ENCODE measurements at regions of chr13 and their contacts with region 1.

Region 1: DNA sequence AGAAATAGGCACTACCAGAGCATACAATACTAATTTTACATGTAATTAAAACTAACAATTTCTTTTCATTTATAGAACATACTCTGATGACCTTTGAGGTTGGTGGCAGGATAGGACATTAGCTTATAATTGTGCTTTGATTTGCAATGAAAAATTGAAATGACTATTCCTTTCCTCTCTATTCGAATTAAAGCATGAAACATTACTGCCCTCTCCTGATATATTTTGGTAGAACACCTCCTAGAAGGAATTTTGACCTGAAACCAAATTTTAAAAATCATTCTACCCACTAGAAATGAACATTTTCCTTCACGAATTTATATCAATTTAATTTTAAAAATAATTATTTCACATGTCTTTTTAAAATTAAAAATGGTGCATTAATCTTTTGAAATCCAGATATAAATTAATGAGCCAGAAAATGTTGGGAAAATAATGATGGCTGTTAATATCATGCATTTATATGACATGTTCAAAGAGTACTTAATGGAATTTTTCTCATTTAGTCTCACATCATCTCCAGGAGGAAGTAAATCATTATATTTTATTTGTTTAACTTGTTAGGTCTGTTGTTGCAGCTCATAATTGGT is 556.3 kb upstream of the ARGLU1 start:
- DNase-seq: no peak
- H3K4me3 ChIP-seq: no peak overlapping the region
- H3K27ac ChIP-seq: no peak overlapping the region
- H3K4me1 ChIP-seq: no peaks in the 10 kb centered on the region
- H3K27me3 ChIP-seq: no peaks in the 10 kb centered on the region
- CTCF ChIP-seq: peak; percentile 22 to 60 (median 46)
- POLR2A ChIP-seq: no peak

Region 2: DNA sequence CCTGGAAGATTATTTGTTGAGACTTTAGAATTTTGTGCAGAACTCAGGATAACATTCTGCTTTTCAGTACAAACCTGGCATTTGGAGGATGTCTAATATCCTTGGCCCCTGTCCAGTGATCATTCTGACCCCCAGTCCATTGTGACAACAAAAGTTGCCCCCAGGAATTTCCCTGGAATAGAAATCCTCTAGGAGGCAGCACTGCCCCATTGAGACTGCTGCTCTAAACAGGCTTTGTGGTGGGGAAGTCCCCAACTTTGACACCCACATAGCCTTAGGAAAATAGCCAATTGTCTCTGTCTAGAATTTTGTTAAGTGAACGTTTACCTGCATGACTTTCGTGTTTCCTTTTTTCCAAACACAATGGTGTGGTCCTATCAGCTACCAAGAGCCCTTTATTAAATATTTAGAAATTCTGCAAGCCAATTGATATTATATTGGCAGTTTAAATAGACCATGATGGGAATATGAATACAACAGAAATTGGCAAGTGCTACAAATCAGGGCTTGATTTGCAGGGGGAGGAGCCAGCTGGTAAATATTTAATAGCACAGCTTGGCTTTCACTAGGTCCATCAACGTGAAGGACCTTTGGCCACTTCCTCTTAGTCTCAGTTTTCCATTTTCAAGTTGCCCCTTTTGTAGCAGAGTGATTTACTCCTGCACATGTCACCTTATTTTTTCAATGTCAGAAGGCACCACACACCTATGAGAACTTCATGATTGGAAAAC is 1040.4 kb before region 1 on chr13:
- intact Hi-C with region 1: loop called in 1 of 2 experiments (anchors 10 kb)
- DNase-seq: peak in 1 of 7 donors; percentile 5
- H3K4me3 ChIP-seq: no peak overlapping the region
- H3K27ac ChIP-seq: no peak overlapping the region
- H3K4me1 ChIP-seq: no peaks in the 10 kb centered on the region
- H3K27me3 ChIP-seq: no peaks in the 10 kb centered on the region
- CTCF ChIP-seq: peak in 4 of 6 experiments; percentile 14 to 31 (median 22)
- POLR2A ChIP-seq: no peak

Region 3: DNA sequence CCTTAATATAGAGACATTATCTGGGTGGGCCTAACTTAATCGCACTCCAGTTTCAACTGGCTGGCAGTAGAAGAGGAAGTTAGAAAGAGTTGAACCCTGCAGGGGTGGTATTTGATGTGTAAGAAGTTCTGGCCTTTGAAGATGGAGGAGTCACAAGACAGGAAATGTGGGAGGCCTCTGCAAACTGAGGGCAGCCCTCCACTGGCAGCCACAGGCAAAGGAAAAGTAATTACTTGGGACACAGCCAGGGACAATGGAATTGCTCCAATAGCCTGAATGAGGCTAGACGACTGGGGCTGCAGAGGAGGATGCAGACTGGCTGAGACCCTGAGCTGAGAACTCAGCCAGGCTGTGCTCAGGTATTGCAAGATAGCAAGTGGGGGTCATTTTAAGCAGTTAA is 147.0 kb after region 1 on chr13:
- intact Hi-C with region 1: no loop called
- DNase-seq: peak in 1 of 7 donors; percentile 3
- H3K4me3 ChIP-seq: no peak overlapping the region
- H3K27ac ChIP-seq: no peak overlapping the region
- H3K4me1 ChIP-seq: no peaks in the 10 kb centered on the region
- H3K27me3 ChIP-seq: no peaks in the 10 kb centered on the region
- CTCF ChIP-seq: no peak
- POLR2A ChIP-seq: no peak

Region 4: DNA sequence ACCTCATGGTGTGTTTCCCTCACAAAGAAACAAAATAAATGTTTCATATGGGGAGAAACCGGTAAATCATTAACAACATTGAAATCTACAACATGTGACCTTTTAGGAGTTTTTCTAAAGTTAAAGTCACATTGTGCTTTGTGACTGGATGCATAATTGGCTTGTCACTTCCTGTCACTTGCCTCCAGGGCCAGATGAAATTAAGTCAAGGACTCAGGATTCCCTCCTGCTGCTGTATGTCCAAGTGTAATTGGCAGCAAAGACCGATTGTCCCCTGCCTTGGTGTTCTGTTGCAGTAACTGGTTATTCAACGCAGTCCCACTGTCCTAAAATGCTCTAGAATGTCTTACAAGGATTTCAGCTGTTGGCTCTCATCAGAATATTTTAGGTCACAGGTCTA is 642.9 kb after region 1 on chr13:
- intact Hi-C with region 1: no loop called
- DNase-seq: peak in 1 of 7 donors; percentile 70
- H3K4me3 ChIP-seq: no peak overlapping the region
- H3K27ac ChIP-seq: no peak overlapping the region
- H3K4me1 ChIP-seq: no peaks in the 10 kb centered on the region
- H3K27me3 ChIP-seq: no peaks in the 10 kb centered on the region
- CTCF ChIP-seq: no peak
- POLR2A ChIP-seq: no peak

Measured in adrenal gland (tissue), 19 donors.